ENCODE measurements at regions of chr17 and their contacts with region 1.

Region 1: DNA sequence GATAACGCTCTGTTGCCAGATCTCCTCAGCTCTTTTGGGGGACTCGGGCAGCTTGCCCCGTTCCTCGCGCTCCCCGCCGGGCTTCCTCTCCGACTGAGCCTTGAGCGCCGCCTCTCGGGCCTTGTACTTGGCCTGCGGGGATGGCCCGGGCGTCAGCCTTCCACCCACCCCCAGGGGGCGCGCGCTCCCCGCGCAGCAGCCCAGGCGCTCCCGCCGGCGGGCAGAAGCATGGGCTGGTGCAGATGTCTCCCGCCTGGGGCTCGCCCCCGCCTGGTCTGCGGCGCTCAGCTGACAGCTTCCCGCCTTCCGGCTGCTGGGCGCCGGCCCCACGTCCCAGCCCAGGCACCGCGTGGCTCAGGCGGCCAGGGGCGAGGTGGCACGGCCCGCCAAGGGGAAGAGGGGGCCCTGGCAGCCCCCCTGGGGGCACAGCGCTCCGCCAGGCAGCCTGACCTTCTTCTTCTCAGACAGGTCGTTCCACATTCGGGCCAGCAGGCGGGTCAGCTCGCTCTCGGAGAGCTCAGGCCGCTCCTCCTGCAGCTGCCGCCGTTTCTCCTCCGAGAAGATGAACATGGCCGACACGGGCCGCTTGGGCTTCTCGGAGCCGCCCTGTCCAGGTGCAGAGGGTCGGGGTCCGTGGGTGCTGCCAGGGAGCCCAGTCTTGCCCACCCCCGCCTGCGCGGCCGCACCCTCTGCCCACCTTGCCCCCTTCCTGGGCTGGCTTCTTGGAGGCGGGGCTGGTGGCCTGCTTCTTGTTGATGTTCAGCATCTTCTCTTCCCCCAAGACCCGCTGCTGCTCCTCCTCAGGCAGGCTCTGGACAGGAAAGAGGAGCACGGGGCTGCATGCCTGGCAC is 8.9 kb downstream of the UBTF start:
- DNase-seq: peak; percentile 87
- H3K4me3 ChIP-seq: peak overlapping the region; percentile 4
- H3K27ac ChIP-seq: no peak overlapping the region
- H3K4me1 ChIP-seq: peaks cover 4% of the 10 kb centered on the region
- H3K27me3 ChIP-seq: no peaks in the 10 kb centered on the region
- CTCF ChIP-seq: peak; percentile 99

Region 2: GRCh38 chr17:43372273-43372911 is 838.2 kb before region 1 on chr17:
- intact Hi-C with region 1: no loop called
- DNase-seq: no peak
- H3K4me3 ChIP-seq: no peak overlapping the region
- H3K27ac ChIP-seq: no peak overlapping the region
- H3K4me1 ChIP-seq: no peaks in the 10 kb centered on the region
- H3K27me3 ChIP-seq: no peaks in the 10 kb centered on the region
- CTCF ChIP-seq: no peak

Region 3: GRCh38 chr17:44159519-44160210 is 50.9 kb before region 1 on chr17:
- intact Hi-C with region 1: no loop called
- DNase-seq: no peak
- H3K4me3 ChIP-seq: no peak overlapping the region
- H3K27ac ChIP-seq: no peak overlapping the region
- H3K4me1 ChIP-seq: no peaks in the 10 kb centered on the region
- H3K27me3 ChIP-seq: no peaks in the 10 kb centered on the region
- CTCF ChIP-seq: no peak

Region 4: GRCh38 chr17:44324571-44325275 is 114.2 kb after region 1 on chr17 and contains the start of gene SLC25A39:
- intact Hi-C with region 1: loop called (anchors 5 kb)
- DNase-seq: peak; percentile 95
- H3K4me3 ChIP-seq: peak within 1 kb of the TSS; percentile 94
- H3K27ac ChIP-seq: peak within 1 kb of the TSS; percentile 98
- H3K4me1 ChIP-seq: peaks cover 5% of the 10 kb centered on the region
- H3K27me3 ChIP-seq: no peaks in the 10 kb centered on the region
- CTCF ChIP-seq: no peak
- total RNA-seq, gene SLC25A39: 115 to 267 TPM

Measured in colonic mucosa (tissue), 4 donors.